ENCODE measurements at regions of chr10 and their contacts with region 1.

Region 1: GRCh38 chr10:119542988-119543813 is 682 bp upstream of the RGS10 start:
- DNase-seq: peak; percentile 79
- H3K4me3 Mint-ChIP-seq: peak overlapping the region; percentile 81
- H3K27ac Mint-ChIP-seq: peak overlapping the region; percentile 87
- H3K4me1 Mint-ChIP-seq: peaks cover 33% of the 10 kb centered on the region
- H3K27me3 Mint-ChIP-seq: no peaks in the 10 kb centered on the region

Region 2: DNA sequence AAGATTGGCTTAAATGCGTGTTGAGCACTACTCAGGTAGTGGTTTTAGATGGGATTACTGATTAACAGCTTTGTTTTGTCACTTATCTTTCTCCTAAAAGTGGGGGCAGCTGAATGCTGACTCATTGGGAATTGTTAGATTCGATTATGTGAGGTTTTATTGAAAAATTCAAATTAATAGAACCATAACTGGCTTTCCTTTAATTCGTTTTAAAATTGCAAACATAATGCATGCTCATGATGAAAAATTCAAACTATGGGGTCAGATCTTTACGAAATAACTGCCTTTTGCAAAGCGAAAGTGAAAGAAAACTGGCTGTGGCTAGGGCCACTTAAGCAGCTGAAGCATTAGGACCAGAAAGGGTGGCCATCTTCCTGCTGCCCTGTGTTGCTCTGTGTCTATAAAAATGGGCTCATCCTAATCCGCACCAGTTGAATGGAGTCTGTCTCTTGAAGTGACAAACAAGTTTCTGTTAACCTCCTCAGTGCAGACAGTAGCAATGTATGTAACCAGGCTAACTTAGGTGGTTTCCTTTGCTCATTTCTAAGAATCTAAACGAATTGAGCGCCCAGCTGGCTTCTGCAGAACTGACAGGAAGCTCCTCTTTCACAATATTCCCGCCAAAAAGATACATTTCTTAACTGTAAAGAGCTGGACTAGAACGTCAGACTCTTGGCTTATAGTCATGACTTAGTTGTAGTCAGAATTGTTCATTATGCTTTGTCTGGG is 411.5 kb before region 1 on chr10:
- CTCF ChIA-PET with region 1: no interaction called
- POLR2A ChIA-PET with region 1: no interaction called
- intact Hi-C with region 1: loop called (anchors 2 kb)
- DNase-seq: peak; percentile 76
- H3K4me3 Mint-ChIP-seq: peak overlapping the region; percentile 80
- H3K27ac Mint-ChIP-seq: peak overlapping the region; percentile 100
- H3K4me1 Mint-ChIP-seq: peaks cover 60% of the 10 kb centered on the region
- H3K27me3 Mint-ChIP-seq: no peaks in the 10 kb centered on the region

Region 3: GRCh38 chr10:119199231-119199992 is 343.8 kb before region 1 on chr10:
- CTCF ChIA-PET with region 1: interaction called, 16 read pairs
- POLR2A ChIA-PET with region 1: interaction called, 4 read pairs
- intact Hi-C with region 1: no loop called
- DNase-seq: peak; percentile 60
- H3K4me3 Mint-ChIP-seq: no peak overlapping the region
- H3K27ac Mint-ChIP-seq: no peak overlapping the region
- H3K4me1 Mint-ChIP-seq: peaks cover 13% of the 10 kb centered on the region
- H3K27me3 Mint-ChIP-seq: peaks cover 1% of the 10 kb centered on the region

Region 4: DNA sequence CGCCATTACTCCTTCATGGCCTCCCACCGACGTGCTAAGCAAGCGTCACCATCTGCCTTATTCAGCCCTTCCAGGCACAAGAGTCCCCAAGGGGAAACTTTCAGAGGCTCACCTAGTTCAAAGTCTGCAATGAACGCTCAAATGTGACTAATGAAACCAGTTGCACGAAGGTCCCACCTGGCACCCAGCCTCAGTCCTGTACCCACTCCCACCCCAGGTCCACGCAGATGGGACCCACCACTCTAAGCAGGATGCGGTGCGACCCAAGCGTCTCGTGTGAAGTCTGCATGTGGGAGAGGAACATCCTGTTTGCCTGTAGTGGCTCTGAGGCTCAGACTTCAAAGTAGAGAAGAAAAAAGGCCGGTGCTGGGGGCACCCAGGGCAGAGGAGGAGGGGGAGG is 41.0 kb before region 1 on chr10:
- CTCF ChIA-PET with region 1: interaction called, 6 read pairs
- POLR2A ChIA-PET with region 1: interaction called, 7 read pairs
- intact Hi-C with region 1: loop called (anchors 1 kb)
- DNase-seq: peak; percentile 88
- H3K4me3 Mint-ChIP-seq: peak overlapping the region; percentile 59
- H3K27ac Mint-ChIP-seq: peak overlapping the region; percentile 99
- H3K4me1 Mint-ChIP-seq: peaks cover 83% of the 10 kb centered on the region
- H3K27me3 Mint-ChIP-seq: no peaks in the 10 kb centered on the region

Region 5: DNA sequence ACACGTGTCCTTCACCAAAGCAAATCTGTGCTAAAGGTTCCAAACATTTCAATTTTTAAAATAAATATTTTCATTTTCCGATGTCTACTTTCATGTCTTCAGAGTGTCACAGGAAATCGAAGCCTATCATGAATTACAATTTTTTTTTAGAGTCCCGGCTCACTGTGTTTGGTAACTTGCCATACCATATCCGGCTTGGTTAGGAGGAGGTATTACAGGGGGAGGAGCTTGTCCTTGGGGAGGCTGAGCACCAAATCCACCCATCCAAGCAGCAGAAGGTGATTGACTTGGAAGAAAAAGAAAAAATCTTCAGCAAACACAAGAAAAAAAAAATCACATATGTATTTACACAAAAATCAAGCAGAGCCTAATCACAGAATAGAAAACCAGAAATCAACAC is 32.3 kb after region 1 on chr10:
- CTCF ChIA-PET with region 1: no interaction called
- POLR2A ChIA-PET with region 1: interaction called, 6 read pairs
- intact Hi-C with region 1: loop called (anchors 2 kb)
- DNase-seq: peak; percentile 25
- H3K4me3 Mint-ChIP-seq: no peak overlapping the region
- H3K27ac Mint-ChIP-seq: peak overlapping the region; percentile 73
- H3K4me1 Mint-ChIP-seq: peaks cover 20% of the 10 kb centered on the region
- H3K27me3 Mint-ChIP-seq: no peaks in the 10 kb centered on the region

Region 6: DNA sequence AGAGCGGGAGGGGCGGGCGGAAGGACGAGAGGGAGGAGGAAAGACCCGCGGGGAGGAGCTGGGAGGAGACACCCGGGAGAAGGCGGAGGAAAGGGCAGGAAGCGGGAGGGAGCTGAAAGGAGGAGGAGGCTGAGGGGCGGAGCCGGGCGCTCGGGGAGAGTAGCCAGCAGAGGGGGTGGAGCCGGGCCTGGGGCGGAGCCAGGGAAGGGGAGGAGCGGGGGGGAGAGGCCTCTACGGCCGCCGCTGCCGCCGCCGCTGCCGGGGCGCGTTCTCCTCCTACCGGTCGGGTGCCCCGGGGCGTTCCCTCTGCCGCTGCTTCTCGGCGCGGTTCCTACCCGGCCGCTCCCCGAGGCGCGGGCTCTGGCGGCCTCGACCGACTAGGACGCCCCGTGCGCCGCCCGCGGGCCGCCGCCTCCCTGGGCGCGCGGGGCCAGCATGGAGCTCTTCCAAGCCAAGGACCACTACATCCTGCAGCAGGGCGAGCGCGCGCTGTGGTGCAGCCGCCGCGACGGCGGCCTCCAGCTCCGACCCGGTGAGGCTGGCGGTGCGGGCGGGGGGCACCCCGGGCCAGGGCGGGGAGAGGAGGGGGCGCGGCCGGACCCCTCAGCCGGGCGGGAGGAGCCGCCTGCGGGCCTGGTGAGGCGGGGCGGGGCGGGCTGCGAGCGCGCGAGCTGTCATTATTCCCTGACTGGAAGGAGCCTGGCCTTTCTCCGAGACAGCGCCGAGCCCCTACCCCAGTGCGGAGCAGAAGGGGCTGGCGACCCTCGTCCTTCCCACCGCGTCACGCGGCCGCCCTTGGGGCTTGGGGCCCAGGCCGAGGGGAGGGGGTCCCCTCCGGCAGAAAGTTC is 182.9 kb after region 1 on chr10 and contains the start of gene INPP5F:
- CTCF ChIA-PET with region 1: interaction called, 3 read pairs
- POLR2A ChIA-PET with region 1: interaction called, 6 read pairs
- intact Hi-C with region 1: loop called (anchors 5 kb)
- DNase-seq: peak; percentile 100
- H3K4me3 Mint-ChIP-seq: peak within 1 kb of the TSS; percentile 91
- H3K27ac Mint-ChIP-seq: peak within 1 kb of the TSS; percentile 76
- H3K4me1 Mint-ChIP-seq: peaks cover 42% of the 10 kb centered on the region
- H3K27me3 Mint-ChIP-seq: no peaks in the 10 kb centered on the region
- total RNA-seq, gene INPP5F: 12.8 to 13.6 TPM

Region 7: GRCh38 chr10:119969609-119970008 is 426.4 kb after region 1 on chr10:
- CTCF ChIA-PET with region 1: no interaction called
- POLR2A ChIA-PET with region 1: no interaction called
- intact Hi-C with region 1: no loop called
- DNase-seq: no peak
- H3K4me3 Mint-ChIP-seq: no peak overlapping the region
- H3K27ac Mint-ChIP-seq: no peak overlapping the region
- H3K4me1 Mint-ChIP-seq: no peaks in the 10 kb centered on the region
- H3K27me3 Mint-ChIP-seq: peaks cover 4% of the 10 kb centered on the region